B cell (primary cell): ENCODE measurements at regions of chr1 and their contacts with region 1.

Region 1: GRCh38 chr1:167627865-167628641 is 2.0 kb upstream of the RCSD1 start:
- DNase-seq: peak; percentile 82
- ATAC-seq: peak; percentile 64
- H3K4me3 ChIP-seq: peak overlapping the region in 3 of 5 experiments; percentile 1 to 98 (median 16)
- H3K4me3 Mint-ChIP-seq: peak overlapping the region; percentile 92
- H3K27ac ChIP-seq: peak overlapping the region; percentile 93 to 98
- H3K27ac Mint-ChIP-seq: peak overlapping the region; percentile 93
- H3K4me1 ChIP-seq: peaks cover 71 to 72% of the 10 kb centered on the region in 2 donors
- H3K4me1 Mint-ChIP-seq: peaks cover 66% of the 10 kb centered on the region
- H3K27me3 ChIP-seq: no peaks in the 10 kb centered on the region
- H3K27me3 Mint-ChIP-seq: no peaks in the 10 kb centered on the region
- CTCF ChIP-seq: no peak

Region 2: DNA sequence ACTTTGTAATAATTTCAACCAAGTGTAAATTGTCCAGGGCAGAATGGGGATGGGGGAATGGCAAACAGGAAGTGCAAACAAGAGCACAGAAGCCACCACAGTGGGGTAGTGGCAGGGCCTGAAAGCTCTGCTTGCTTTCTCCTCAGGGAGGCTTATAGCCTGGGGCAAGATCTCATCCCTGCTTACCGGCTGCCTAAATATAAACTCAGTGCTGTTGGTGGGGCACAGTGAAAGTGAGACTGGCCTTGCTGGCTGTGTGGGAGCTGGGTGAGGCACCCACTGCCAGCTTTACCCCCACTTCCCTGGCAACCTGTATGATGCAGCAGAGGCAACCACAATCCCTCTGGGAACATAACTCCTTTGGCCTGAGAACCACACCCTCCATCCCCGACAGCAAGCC is 518.9 kb before region 1 on chr1:
- CTCF ChIA-PET with region 1: no interaction called
- POLR2A ChIA-PET with region 1: no interaction called
- intact Hi-C with region 1: no loop called
- DNase-seq: no peak
- ATAC-seq: peak; percentile 21
- H3K4me3 ChIP-seq: no peak overlapping the region
- H3K4me3 Mint-ChIP-seq: no peak overlapping the region
- H3K27ac ChIP-seq: no peak overlapping the region
- H3K27ac Mint-ChIP-seq: no peak overlapping the region
- H3K4me1 ChIP-seq: peaks cover 22 to 32% of the 10 kb centered on the region in 2 donors
- H3K4me1 Mint-ChIP-seq: peaks cover 36% of the 10 kb centered on the region
- H3K27me3 ChIP-seq: peaks cover 0 to 8% (median 0%) of the 10 kb centered on the region in 4 experiments
- H3K27me3 Mint-ChIP-seq: peaks cover 15% of the 10 kb centered on the region
- CTCF ChIP-seq: no peak

Region 3: DNA sequence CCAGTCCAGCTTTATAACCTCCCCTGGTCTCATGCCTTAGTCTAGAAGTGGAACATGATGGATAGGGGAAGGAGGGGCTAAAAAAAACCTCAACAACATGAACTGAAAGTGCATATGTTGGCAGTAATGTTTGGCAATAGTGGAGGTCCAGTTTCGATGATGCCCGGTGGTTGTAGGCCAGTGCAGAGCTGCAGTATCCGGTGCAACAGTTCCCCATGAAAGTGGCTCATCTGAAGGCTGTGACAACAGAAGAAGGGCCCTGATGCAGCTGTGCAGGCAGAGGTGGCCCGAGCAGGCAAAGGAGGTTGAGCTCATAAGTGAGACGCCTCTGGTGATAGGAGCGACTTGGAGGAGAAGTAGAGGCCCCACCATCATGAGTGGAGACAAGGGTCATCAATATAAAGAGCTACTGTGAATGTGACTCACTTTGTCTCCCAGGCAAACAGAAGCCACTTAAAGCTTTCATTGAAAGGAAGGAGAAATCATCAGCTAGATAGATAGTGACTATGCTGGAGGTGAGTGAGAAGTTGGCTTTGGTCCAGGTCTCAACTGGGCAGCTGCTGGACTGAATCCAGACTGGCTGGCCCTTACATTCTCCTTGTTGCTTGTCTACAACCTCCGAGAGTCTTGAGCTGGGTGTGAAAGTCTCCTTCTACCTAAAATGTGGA is 64.3 kb before region 1 on chr1:
- CTCF ChIA-PET with region 1: no interaction called
- POLR2A ChIA-PET with region 1: interaction called, 10 read pairs
- intact Hi-C with region 1: no loop called
- DNase-seq: no peak
- ATAC-seq: no peak
- H3K4me3 ChIP-seq: no peak overlapping the region
- H3K4me3 Mint-ChIP-seq: no peak overlapping the region
- H3K27ac ChIP-seq: no peak overlapping the region
- H3K27ac Mint-ChIP-seq: no peak overlapping the region
- H3K4me1 ChIP-seq: peaks cover 9 to 10% of the 10 kb centered on the region in 2 donors
- H3K4me1 Mint-ChIP-seq: peaks cover 12% of the 10 kb centered on the region
- H3K27me3 ChIP-seq: peaks cover 0 to 8% (median 0%) of the 10 kb centered on the region in 4 experiments
- H3K27me3 Mint-ChIP-seq: peaks cover 7% of the 10 kb centered on the region
- CTCF ChIP-seq: no peak

Region 4: GRCh38 chr1:167617153-167618147 is 10.6 kb before region 1 on chr1:
- CTCF ChIA-PET with region 1: interaction called, 72 read pairs
- POLR2A ChIA-PET with region 1: interaction called, 289 read pairs
- intact Hi-C with region 1: loop called (anchors 1 kb)
- DNase-seq: peak; percentile 94
- ATAC-seq: peak; percentile 90
- H3K4me3 ChIP-seq: peak overlapping the region; percentile 42 to 81 (median 58)
- H3K4me3 Mint-ChIP-seq: peak overlapping the region; percentile 84
- H3K27ac ChIP-seq: peak overlapping the region; percentile 89 to 97
- H3K27ac Mint-ChIP-seq: peak overlapping the region; percentile 92
- H3K4me1 ChIP-seq: peaks cover 87 to 92% of the 10 kb centered on the region in 2 donors
- H3K4me1 Mint-ChIP-seq: peaks cover 86% of the 10 kb centered on the region
- H3K27me3 ChIP-seq: no peaks in the 10 kb centered on the region
- H3K27me3 Mint-ChIP-seq: no peaks in the 10 kb centered on the region
- CTCF ChIP-seq: no peak

Region 5: GRCh38 chr1:167650269-167651160 is 22.5 kb after region 1 on chr1:
- CTCF ChIA-PET with region 1: interaction called, 20 read pairs
- POLR2A ChIA-PET with region 1: interaction called, 19 read pairs
- intact Hi-C with region 1: loop called (anchors 2 kb)
- DNase-seq: peak; percentile 60
- ATAC-seq: peak; percentile 73
- H3K4me3 ChIP-seq: peak overlapping the region in 3 of 5 experiments; percentile 1 to 16 (median 15)
- H3K4me3 Mint-ChIP-seq: peak overlapping the region; percentile 84
- H3K27ac ChIP-seq: peak overlapping the region; percentile 76 to 83
- H3K27ac Mint-ChIP-seq: peak overlapping the region; percentile 94
- H3K4me1 ChIP-seq: peaks cover 83 to 89% of the 10 kb centered on the region in 2 donors
- H3K4me1 Mint-ChIP-seq: peaks cover 89% of the 10 kb centered on the region
- H3K27me3 ChIP-seq: no peaks in the 10 kb centered on the region
- H3K27me3 Mint-ChIP-seq: no peaks in the 10 kb centered on the region
- CTCF ChIP-seq: no peak

Region 6: DNA sequence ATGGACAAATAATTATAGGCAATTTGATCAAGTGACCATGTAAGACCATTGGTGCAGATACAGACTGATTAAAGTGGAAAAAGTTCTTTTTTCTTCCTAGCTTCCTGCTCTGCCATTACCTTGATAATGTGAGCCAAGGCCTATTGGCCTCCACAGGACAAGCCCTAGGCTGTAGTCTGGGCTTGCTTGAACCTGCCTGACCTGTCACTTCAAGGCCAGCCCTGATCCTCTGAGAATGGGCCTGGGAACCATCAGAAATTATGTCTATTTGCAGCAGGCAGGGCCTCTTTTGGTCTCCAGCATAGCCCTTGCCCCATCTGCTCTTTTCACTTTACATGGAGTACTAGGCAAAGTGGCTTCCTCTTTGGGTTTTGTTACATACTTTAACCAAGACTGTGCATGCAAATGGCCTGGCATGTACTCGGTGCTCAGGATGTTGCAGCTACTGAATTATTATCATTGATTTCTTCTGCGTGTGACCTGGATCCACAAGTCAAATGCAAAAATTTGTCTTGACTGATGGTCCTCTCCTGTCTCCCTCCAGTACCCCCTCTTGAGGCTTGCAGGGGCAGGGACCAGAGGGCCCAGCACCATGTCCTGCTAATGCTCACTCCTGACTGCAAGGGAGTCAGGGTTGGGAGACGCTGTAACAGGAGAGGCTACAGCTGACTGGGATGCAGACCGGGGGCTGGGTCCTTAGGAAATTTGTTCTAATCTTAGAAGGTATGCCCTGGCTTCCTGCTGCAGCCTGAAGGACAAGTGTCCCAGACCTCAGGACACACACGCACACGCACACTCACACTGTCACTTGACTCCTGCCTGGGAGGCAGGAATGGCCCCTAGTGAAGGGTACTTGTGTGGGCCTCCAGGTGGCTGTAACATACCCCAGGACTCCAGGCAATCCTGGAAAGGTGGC is 41.4 kb after region 1 on chr1:
- CTCF ChIA-PET with region 1: interaction called, 3 read pairs
- POLR2A ChIA-PET with region 1: interaction called, 4 read pairs
- intact Hi-C with region 1: loop called (anchors 2 kb)
- DNase-seq: no peak
- ATAC-seq: peak; percentile 24
- H3K4me3 ChIP-seq: no peak overlapping the region
- H3K4me3 Mint-ChIP-seq: peak overlapping the region; percentile 36
- H3K27ac ChIP-seq: peak overlapping the region; percentile 27 to 72
- H3K27ac Mint-ChIP-seq: peak overlapping the region; percentile 47
- H3K4me1 ChIP-seq: peaks cover 76 to 84% of the 10 kb centered on the region in 2 donors
- H3K4me1 Mint-ChIP-seq: peaks cover 97% of the 10 kb centered on the region
- H3K27me3 ChIP-seq: no peaks in the 10 kb centered on the region
- H3K27me3 Mint-ChIP-seq: no peaks in the 10 kb centered on the region
- CTCF ChIP-seq: no peak